ENCODE measurements at regions of chr14 and their contacts with region 1.

Region 1: GRCh38 chr14:74963705-74964271 is 8.4 kb upstream of the PGF start:
- DNase-seq: no peak
- H3K4me3 ChIP-seq: no peak overlapping the region
- CTCF ChIP-seq: no peak

Region 2: DNA sequence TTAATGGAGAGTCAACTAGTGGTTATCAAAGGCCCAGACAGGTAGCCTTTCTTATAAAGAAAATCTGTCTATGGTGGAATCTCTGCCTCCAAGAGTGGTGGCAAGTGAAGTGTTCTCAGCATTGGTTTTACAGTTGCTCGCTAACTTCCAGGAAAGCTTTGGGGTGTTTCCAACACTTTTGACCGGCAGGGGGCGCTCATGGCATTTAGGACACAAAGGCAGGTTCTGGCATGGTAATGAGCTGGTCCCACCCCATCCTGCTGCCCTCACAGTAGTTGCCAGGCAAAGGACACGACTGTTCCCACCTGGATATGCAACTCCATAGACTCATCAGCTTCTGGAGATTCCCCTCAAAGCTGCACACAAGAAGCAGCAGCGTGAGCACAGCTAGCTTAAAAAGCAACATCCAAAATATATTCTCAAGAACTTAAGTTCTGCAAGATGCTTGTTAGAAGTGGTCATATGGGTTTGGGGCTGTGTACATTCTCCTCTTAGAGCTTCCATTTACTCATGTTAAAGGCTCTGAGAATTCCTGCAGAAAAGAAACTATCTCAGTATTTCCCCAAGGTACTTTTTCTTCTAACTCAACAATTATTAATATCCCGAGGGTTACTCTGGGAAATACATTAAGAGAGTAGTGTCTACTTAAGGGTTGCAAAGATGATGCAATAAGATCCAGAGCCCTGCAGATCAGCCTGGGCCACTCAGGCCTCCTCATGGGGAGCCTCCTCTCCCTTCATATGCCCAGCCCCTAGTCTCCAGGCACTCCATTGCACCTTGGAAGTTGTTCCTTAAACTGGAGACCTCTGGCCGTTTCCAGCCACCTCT is 102.7 kb before region 1 on chr14:
- in situ Hi-C with region 1: loop called (anchors 5 kb)
- DNase-seq: peak; percentile 75
- H3K4me3 ChIP-seq: no peak overlapping the region
- CTCF ChIP-seq: peak; percentile 88

Measured in astrocyte of the cerebellum (primary cell).